PC-3 (cell line): ENCODE measurements at regions of chr3 and their contacts with region 1.

Region 1: GRCh38 chr3:105868742-105869530 is at the start of gene CBLB:
- DNase-seq: peak; percentile 97
- ATAC-seq: peak; percentile 83
- H3K4me3 ChIP-seq: peak within 1 kb of the TSS; percentile 96
- H3K27ac ChIP-seq: peak within 1 kb of the TSS; percentile 61
- H3K4me1 ChIP-seq: peaks cover 43% of the 10 kb centered on the region
- H3K27me3 ChIP-seq: no peaks in the 10 kb centered on the region
- CTCF ChIP-seq: no peak
- total RNA-seq, gene CBLB: 20.0 and 23.9 TPM in 2 replicates

Region 2: GRCh38 chr3:105527949-105528348 is 341.0 kb before region 1 on chr3:
- CTCF ChIA-PET with region 1: no interaction called
- POLR2A ChIA-PET with region 1: no interaction called
- intact Hi-C with region 1: loop called (anchors 10 kb)
- DNase-seq: peak; percentile 85
- ATAC-seq: peak; percentile 66
- H3K4me3 ChIP-seq: no peak overlapping the region
- H3K27ac ChIP-seq: peak overlapping the region; percentile 72
- H3K4me1 ChIP-seq: peaks cover 62% of the 10 kb centered on the region
- H3K27me3 ChIP-seq: no peaks in the 10 kb centered on the region
- CTCF ChIP-seq: no peak

Region 3: DNA sequence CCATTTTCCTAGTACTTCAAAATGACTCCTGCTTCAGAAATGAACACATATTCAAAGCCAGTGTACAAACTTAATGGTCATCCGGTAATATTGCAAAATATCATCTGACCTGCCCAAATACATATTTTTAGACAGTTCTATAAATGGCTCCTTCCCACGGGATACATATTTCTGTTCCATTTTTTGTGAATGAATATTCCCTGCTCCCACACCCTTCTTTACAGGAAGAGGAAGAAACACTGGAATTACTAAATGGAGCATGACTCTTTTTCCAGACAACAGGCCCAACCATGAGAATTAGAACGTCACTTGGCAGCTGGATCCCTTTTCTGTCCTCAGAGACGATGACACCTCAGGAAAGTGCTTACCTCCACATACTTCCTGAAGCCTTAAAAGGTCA is 37.9 kb after region 1 on chr3:
- CTCF ChIA-PET with region 1: no interaction called
- POLR2A ChIA-PET with region 1: interaction called, 4 read pairs
- intact Hi-C with region 1: loop called (anchors 2 kb)
- DNase-seq: peak; percentile 61
- ATAC-seq: peak; percentile 60
- H3K4me3 ChIP-seq: no peak overlapping the region
- H3K27ac ChIP-seq: peak overlapping the region; percentile 83
- H3K4me1 ChIP-seq: peaks cover 27% of the 10 kb centered on the region
- H3K27me3 ChIP-seq: no peaks in the 10 kb centered on the region
- CTCF ChIP-seq: no peak

Region 4: DNA sequence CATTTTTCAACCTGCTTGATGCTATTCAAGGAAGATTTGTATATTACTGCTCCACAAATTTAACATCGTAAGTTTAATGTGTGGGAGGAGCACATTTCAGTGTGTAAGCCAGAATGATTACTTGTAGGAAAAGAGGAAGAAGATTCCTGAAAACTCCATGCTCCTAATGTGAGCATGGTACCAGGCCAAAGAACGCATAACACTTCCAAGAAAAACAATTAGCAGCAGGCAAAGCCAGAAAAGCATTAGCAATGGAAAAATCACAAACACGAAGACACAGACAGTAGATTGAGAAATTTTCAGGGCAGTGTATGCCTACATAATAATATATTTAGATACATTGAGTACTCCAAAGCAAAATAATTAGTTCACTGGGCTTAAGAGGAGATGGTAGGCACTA is 96.4 kb after region 1 on chr3:
- CTCF ChIA-PET with region 1: no interaction called
- POLR2A ChIA-PET with region 1: no interaction called
- intact Hi-C with region 1: loop called (anchors 2 kb)
- DNase-seq: no peak
- ATAC-seq: no peak
- H3K4me3 ChIP-seq: no peak overlapping the region
- H3K27ac ChIP-seq: no peak overlapping the region
- H3K4me1 ChIP-seq: peaks cover 38% of the 10 kb centered on the region
- H3K27me3 ChIP-seq: no peaks in the 10 kb centered on the region
- CTCF ChIP-seq: no peak

Region 5: GRCh38 chr3:106119614-106120082 is 250.7 kb after region 1 on chr3:
- CTCF ChIA-PET with region 1: no interaction called
- POLR2A ChIA-PET with region 1: interaction called, 3 read pairs
- intact Hi-C with region 1: loop called (anchors 2 kb)
- DNase-seq: peak; percentile 34
- ATAC-seq: no peak
- H3K4me3 ChIP-seq: no peak overlapping the region
- H3K27ac ChIP-seq: peak overlapping the region; percentile 58
- H3K4me1 ChIP-seq: peaks cover 75% of the 10 kb centered on the region
- H3K27me3 ChIP-seq: no peaks in the 10 kb centered on the region
- CTCF ChIP-seq: no peak

Region 6: GRCh38 chr3:106609666-106610301 is 740.8 kb after region 1 on chr3:
- CTCF ChIA-PET with region 1: no interaction called
- POLR2A ChIA-PET with region 1: no interaction called
- intact Hi-C with region 1: loop called (anchors 2 kb)
- DNase-seq: peak; percentile 89
- ATAC-seq: peak; percentile 80
- H3K4me3 ChIP-seq: no peak overlapping the region
- H3K27ac ChIP-seq: no peak overlapping the region
- H3K4me1 ChIP-seq: peaks cover 31% of the 10 kb centered on the region
- H3K27me3 ChIP-seq: no peaks in the 10 kb centered on the region
- CTCF ChIP-seq: peak; percentile 96